Activated B cell treated with CpG ODN at 0.5 μM for 24 hours (primary cell): ENCODE measurements at regions of chr22 and their contacts with region 1.

Region 1: GRCh38 chr22:36781656-36782627 is 6.0 kb upstream of the IFT27 start:
- DNase-seq: peak; percentile 87
- ATAC-seq: peak; percentile 98
- H3K4me3 Mint-ChIP-seq: peak overlapping the region; percentile 41
- H3K27ac Mint-ChIP-seq: peak overlapping the region; percentile 77
- H3K4me1 Mint-ChIP-seq: peaks cover 14% of the 10 kb centered on the region
- H3K27me3 Mint-ChIP-seq: peaks cover 3% of the 10 kb centered on the region
- CTCF ChIP-seq: peak; percentile 97

Region 2: DNA sequence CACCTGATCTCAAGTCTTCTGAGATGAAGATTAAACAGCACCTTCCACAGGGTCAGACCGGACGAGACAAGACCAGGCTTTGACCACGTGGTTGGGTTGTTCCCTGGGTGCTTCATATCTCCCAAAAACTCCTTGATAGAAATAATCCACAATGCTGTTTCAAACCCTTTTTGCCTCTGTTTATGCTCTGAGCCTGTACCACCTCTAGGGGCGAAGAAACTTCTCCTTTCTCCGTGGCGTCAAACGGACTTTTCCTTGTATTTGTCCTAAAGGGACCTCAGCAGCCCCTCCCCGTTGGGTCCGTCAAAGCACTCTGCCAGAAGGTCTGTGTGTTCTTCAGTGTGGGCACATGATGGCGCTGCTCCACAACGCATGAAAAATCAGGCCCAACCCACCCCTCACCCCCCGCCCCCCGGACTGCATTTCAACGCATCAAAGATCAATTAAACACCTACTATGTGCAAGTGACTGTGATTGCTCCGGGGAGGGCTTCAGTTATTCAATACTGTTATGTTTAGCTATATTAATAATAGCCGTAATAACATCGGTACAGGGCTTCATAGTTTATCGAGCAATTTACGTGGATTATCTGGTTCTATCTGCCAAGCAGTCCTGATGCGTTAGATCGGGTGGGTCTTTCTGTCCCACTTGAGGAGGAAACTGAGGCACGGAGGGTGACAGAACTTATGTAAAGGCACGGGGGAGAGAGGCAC is 235.7 kb before region 1 on chr22:
- CTCF ChIA-PET with region 1: interaction called, 3 read pairs
- POLR2A ChIA-PET with region 1: no interaction called
- intact Hi-C with region 1: loop called (anchors 1 kb)
- DNase-seq: no peak
- ATAC-seq: peak; percentile 82
- H3K4me3 Mint-ChIP-seq: no peak overlapping the region
- H3K27ac Mint-ChIP-seq: no peak overlapping the region
- H3K4me1 Mint-ChIP-seq: peaks cover 28% of the 10 kb centered on the region
- H3K27me3 Mint-ChIP-seq: no peaks in the 10 kb centered on the region
- CTCF ChIP-seq: no peak

Region 3: GRCh38 chr22:36816636-36817524 is 34.9 kb after region 1 on chr22 and contains the start of gene PVALB:
- CTCF ChIA-PET with region 1: no interaction called
- POLR2A ChIA-PET with region 1: no interaction called
- intact Hi-C with region 1: no loop called
- DNase-seq: no peak
- ATAC-seq: no peak
- H3K4me3 Mint-ChIP-seq: no peak within 1 kb of the TSS
- H3K27ac Mint-ChIP-seq: no peak within 1 kb of the TSS
- H3K4me1 Mint-ChIP-seq: no peaks in the 10 kb centered on the region
- H3K27me3 Mint-ChIP-seq: peaks cover 71% of the 10 kb centered on the region
- CTCF ChIP-seq: no peak
- total RNA-seq, gene PVALB: not detected in 2 replicates

Region 4: DNA sequence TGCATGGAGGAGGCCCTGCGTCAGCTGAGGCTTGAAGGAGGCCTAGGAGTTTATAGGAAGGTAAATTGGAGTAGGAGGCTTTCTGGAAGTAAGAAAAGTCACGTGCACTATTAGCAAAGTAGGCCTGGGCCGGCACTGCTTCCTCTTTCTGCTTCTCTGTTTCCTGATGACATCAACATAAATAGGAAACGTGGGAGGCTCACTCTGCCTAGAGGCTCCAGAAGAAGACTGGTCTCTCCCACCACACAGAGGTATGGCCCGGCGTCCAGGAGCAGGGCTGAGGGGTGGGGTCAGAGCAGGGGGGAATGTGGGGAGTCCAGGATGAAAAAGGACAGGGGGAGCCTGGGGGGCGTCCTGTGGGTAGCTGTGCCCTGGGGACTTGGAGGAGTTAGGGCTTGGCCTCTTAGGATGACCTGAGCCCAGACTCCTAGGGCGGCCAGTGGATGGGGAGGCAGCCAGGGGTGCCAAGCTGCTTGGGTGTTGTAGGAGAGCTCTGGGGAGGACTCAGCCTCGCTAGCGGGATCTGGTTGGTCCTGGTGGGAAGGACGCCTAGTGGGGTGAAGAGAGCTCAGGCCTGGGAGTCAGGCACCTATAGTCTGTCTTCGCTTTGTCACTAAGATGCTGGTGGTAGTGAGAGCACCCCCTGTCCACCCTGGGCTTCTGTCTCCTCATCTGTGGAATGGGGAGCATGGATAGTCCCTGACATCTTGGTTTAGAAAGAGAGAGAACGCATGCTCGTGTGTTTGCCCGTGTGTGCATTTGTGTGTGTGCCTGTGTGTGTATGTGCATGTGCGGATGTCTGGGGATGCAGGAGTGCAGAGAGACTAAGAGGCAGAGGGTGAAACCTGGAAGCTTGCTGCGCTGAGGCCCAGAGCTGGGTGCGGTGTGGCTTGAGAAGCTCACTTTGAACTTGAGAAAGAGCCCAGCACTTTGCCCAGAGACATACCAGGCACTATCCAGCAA is 131.8 kb after region 1 on chr22 and contains the start of gene CSF2RB:
- CTCF ChIA-PET with region 1: interaction called, 3 read pairs
- POLR2A ChIA-PET with region 1: no interaction called
- intact Hi-C with region 1: loop called (anchors 5 kb)
- DNase-seq: peak; percentile 36
- ATAC-seq: peak; percentile 85
- H3K4me3 Mint-ChIP-seq: peak within 1 kb of the TSS; percentile 94
- H3K27ac Mint-ChIP-seq: peak within 1 kb of the TSS; percentile 95
- H3K4me1 Mint-ChIP-seq: peaks cover 50% of the 10 kb centered on the region
- H3K27me3 Mint-ChIP-seq: peaks cover 1% of the 10 kb centered on the region
- CTCF ChIP-seq: no peak
- total RNA-seq, gene CSF2RB: 141 and 152 TPM in 2 replicates

Region 5: DNA sequence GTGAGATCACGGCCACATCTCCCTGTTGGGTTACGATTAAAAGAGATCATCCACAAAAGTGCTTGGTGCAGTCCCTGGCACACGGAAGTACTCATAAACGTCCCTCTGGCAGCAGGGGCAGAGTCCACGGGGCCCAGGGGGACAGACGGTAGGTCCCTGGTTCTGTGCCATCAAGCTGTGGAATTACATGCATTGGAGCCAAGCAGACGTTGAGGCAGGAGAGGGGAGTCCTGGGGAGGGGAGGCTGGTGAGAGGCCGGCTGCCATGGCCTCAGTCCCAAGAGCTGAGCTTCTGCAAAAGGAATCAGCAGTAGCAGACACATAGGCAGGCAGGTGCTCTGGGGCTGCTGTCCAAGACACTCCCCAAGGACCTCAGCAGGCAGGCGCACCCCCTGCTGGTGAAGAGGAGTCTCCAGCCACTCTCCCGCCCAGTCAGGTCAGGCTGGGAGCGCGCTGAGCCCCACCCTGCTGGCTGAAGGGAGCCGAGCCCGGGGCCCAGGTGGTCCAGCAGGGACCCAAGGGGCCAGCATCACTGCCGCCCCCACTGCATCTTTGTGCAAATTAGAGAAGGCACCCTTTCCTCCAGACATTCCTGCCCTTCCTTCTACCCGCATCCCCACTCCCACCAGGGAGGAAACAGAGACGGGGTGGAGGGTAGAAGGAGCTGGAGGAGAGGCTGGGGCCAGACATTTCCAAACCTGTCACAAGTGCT is 262.0 kb after region 1 on chr22:
- CTCF ChIA-PET with region 1: interaction called, 30 read pairs
- POLR2A ChIA-PET with region 1: no interaction called
- intact Hi-C with region 1: loop called (anchors 1 kb)
- DNase-seq: peak; percentile 52
- ATAC-seq: peak; percentile 97
- H3K4me3 Mint-ChIP-seq: no peak overlapping the region
- H3K27ac Mint-ChIP-seq: no peak overlapping the region
- H3K4me1 Mint-ChIP-seq: peaks cover 12% of the 10 kb centered on the region
- H3K27me3 Mint-ChIP-seq: peaks cover 14% of the 10 kb centered on the region
- CTCF ChIP-seq: peak; percentile 41